ENCODE measurements at regions of chr13 and their contacts with region 1.

Region 1: DNA sequence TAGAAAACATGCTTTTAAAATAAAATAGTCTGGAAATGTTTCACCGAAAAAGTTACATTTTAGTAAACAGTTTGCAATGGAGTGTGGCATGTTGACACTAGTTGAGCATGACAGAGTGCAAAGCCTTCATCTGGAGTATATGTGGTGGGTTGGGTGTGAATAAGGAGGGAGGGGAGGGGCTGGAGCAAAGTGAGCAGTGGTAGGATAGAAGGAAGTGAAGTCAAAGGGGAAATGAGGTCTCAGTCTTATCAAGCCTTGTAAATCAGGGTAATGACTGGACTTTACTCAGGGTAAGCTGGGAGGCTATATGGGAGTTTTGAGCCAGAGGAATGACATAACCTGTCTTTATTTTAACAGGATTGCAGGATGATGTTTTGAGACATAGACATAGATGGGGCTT is 222.8 kb downstream of the PCDH20 start:
- DNase-seq: no peak
- H3K4me3 ChIP-seq: no peak overlapping the region
- H3K27ac ChIP-seq: no peak overlapping the region
- H3K4me1 ChIP-seq: no peaks in the 10 kb centered on the region
- CTCF ChIP-seq: no peak

Region 2: GRCh38 chr13:60520902-60521569 is 671.8 kb before region 1 on chr13:
- CTCF ChIA-PET with region 1: no interaction called
- POLR2A ChIA-PET with region 1: no interaction called
- intact Hi-C with region 1: no loop called
- DNase-seq: no peak
- H3K4me3 ChIP-seq: no peak overlapping the region
- H3K27ac ChIP-seq: no peak overlapping the region
- H3K4me1 ChIP-seq: no peaks in the 10 kb centered on the region
- CTCF ChIP-seq: no peak

Region 3: GRCh38 chr13:61685682-61686012 is 492.8 kb after region 1 on chr13:
- CTCF ChIA-PET with region 1: no interaction called
- POLR2A ChIA-PET with region 1: interaction called, 10 read pairs
- intact Hi-C with region 1: no loop called
- DNase-seq: no peak
- H3K4me3 ChIP-seq: no peak overlapping the region
- H3K27ac ChIP-seq: no peak overlapping the region
- H3K4me1 ChIP-seq: no peaks in the 10 kb centered on the region
- CTCF ChIP-seq: no peak